Natural killer cell (primary cell): ENCODE measurements at regions of chr1 and their contacts with region 1.

Region 1: GRCh38 chr1:167066333-167067122 is 23.6 kb downstream of the GPA33 start:
- DNase-seq: peak; percentile 81 to 85
- ATAC-seq: peak; percentile 83 to 100 (median 98)
- H3K4me3 ChIP-seq: no peak overlapping the region
- H3K4me3 Mint-ChIP-seq: peak overlapping the region; percentile 38
- H3K27ac ChIP-seq: no peak overlapping the region
- H3K27ac Mint-ChIP-seq: no peak overlapping the region
- H3K4me1 ChIP-seq: peaks cover 8% of the 10 kb centered on the region
- H3K4me1 Mint-ChIP-seq: peaks cover 0 to 16% of the 10 kb centered on the region in 2 donors
- H3K27me3 ChIP-seq: no peaks in the 10 kb centered on the region
- H3K27me3 Mint-ChIP-seq: no peaks in the 10 kb centered on the region
- CTCF ChIP-seq: peak; percentile 99

Region 2: DNA sequence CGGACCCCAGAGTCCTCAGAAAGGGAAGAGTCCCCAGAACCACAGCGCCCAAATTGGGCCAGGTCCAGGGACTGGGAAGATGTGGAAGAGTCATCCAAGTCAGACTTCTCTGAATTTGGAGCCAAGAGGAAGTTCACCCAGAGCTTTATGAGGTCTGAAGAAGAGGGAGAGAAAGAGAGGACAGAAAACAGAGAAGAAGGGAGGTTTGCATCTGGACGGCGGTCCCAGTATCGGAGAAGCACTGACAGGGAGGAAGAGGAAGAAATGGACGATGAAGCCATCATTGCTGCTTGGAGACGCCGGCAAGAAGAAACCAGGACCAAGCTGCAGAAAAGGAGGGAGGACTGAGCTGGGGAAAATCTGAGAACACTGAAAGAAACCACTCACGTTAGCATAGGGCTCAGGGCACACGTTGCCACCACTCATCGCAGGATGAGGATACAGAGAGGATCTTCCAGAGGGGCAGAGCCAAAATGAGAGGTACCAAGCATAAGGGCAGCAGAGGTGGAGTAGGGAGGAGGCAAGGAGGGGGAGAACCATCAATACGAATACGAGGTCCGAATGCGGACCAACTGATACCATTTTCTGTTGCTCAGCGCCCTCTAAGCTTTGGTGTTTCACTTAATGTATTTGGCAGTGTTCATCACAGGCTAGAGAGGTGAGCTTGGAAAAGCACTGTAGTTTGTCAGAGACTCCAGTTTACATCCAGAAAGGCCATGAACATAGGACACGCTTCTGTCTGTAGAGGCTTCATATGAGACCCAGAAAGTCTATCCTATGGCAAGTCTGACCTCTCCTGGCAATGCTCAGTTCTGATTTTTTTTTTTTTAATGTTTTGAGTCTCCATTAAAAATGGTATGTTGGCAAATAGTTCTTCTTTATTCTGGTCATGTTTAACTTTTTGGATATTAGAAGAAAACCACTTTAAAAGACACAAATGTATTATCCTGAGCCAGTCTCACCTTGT is 62.0 kb after region 1 on chr1:
- intact Hi-C with region 1: loop called (anchors 1 kb)
- DNase-seq: peak in 1 of 2 donors; percentile 49
- ATAC-seq: peak in 1 of 3 donors; percentile 41
- H3K4me3 ChIP-seq: no peak overlapping the region
- H3K4me3 Mint-ChIP-seq: no peak overlapping the region
- H3K27ac ChIP-seq: no peak overlapping the region
- H3K27ac Mint-ChIP-seq: no peak overlapping the region
- H3K4me1 ChIP-seq: no peaks in the 10 kb centered on the region
- H3K4me1 Mint-ChIP-seq: peaks cover 0 to 4% of the 10 kb centered on the region in 2 donors
- H3K27me3 ChIP-seq: no peaks in the 10 kb centered on the region
- H3K27me3 Mint-ChIP-seq: peaks cover 35 to 37% of the 10 kb centered on the region in 2 donors
- CTCF ChIP-seq: peak; percentile 17

Region 3: GRCh38 chr1:167220537-167221125 is 154.1 kb after region 1 on chr1 and contains the start of gene POU2F1:
- intact Hi-C with region 1: loop called (anchors 2 kb)
- DNase-seq: peak; percentile 97 to 100
- ATAC-seq: peak; percentile 77 to 95 (median 81)
- H3K4me3 ChIP-seq: peak within 1 kb of the TSS; percentile 98
- H3K4me3 Mint-ChIP-seq: peak within 1 kb of the TSS; percentile 93
- H3K27ac ChIP-seq: peak within 1 kb of the TSS; percentile 95
- H3K27ac Mint-ChIP-seq: peak within 1 kb of the TSS; percentile 97
- H3K4me1 ChIP-seq: peaks cover 11% of the 10 kb centered on the region
- H3K4me1 Mint-ChIP-seq: peaks cover 46 to 48% of the 10 kb centered on the region in 2 donors
- H3K27me3 ChIP-seq: no peaks in the 10 kb centered on the region
- H3K27me3 Mint-ChIP-seq: no peaks in the 10 kb centered on the region
- CTCF ChIP-seq: peak; percentile 63
- total RNA-seq, gene POU2F1: 39.8 to 44.6 (median 40.9) TPM

Region 4: DNA sequence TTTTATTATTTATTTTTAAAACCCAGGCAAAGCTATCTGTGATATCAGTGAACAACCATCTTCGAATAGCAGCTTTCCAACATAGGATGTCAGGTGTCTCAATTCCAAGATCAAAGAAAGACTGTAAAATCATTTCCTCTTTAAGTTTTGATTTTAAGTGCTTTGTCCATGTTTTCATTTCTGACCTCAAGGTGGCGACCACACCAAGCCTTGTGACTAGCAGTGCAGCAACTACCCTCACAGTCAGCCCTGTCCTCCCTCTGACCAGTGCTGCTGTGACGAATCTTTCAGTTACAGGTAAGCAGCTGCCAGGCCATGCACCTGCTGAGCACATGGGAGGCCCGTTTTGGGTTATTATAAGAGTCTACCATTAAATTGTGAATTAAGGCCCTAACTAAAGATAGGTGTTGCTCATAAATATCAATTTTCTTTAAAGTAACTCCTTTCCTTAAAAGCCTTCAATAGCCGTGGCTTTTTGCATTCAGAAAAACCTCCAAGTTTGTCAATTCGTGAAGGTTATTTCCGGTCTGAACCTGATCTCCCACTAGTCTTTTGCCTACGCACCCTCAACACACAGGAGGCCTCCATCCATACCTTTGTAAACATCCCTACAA is 334.8 kb after region 1 on chr1:
- intact Hi-C with region 1: loop called (anchors 10 kb)
- DNase-seq: peak; percentile 55 to 80
- ATAC-seq: peak; percentile 82 to 98 (median 97)
- H3K4me3 ChIP-seq: no peak overlapping the region
- H3K4me3 Mint-ChIP-seq: no peak overlapping the region
- H3K27ac ChIP-seq: no peak overlapping the region
- H3K27ac Mint-ChIP-seq: peak overlapping the region; percentile 58 to 62
- H3K4me1 ChIP-seq: peaks cover 4% of the 10 kb centered on the region
- H3K4me1 Mint-ChIP-seq: peaks cover 9 to 10% of the 10 kb centered on the region in 2 donors
- H3K27me3 ChIP-seq: no peaks in the 10 kb centered on the region
- H3K27me3 Mint-ChIP-seq: no peaks in the 10 kb centered on the region
- CTCF ChIP-seq: peak; percentile 70

Region 5: GRCh38 chr1:167442124-167442848 is 375.8 kb after region 1 on chr1:
- intact Hi-C with region 1: loop called (anchors 10 kb)
- DNase-seq: peak; percentile 83 to 92
- ATAC-seq: peak; percentile 47 to 76 (median 63)
- H3K4me3 ChIP-seq: no peak overlapping the region
- H3K4me3 Mint-ChIP-seq: peak overlapping the region; percentile 78
- H3K27ac ChIP-seq: peak overlapping the region; percentile 86
- H3K27ac Mint-ChIP-seq: peak overlapping the region; percentile 91 to 100
- H3K4me1 ChIP-seq: peaks cover 94% of the 10 kb centered on the region
- H3K4me1 Mint-ChIP-seq: peaks cover 87 to 94% of the 10 kb centered on the region in 2 donors
- H3K27me3 ChIP-seq: no peaks in the 10 kb centered on the region
- H3K27me3 Mint-ChIP-seq: no peaks in the 10 kb centered on the region
- CTCF ChIP-seq: peak; percentile 79

Region 6: GRCh38 chr1:167533851-167534300 is 467.3 kb after region 1 on chr1:
- intact Hi-C with region 1: loop called (anchors 2 kb)
- DNase-seq: peak; percentile 65 to 84
- ATAC-seq: peak; percentile 87 to 99 (median 96)
- H3K4me3 ChIP-seq: no peak overlapping the region
- H3K4me3 Mint-ChIP-seq: no peak overlapping the region
- H3K27ac ChIP-seq: no peak overlapping the region
- H3K27ac Mint-ChIP-seq: peak overlapping the region in 1 of 2 donors; percentile 22
- H3K4me1 ChIP-seq: peaks cover 6% of the 10 kb centered on the region
- H3K4me1 Mint-ChIP-seq: no peaks in the 10 kb centered on the region
- H3K27me3 ChIP-seq: no peaks in the 10 kb centered on the region
- H3K27me3 Mint-ChIP-seq: no peaks in the 10 kb centered on the region
- CTCF ChIP-seq: peak; percentile 91

Region 7: GRCh38 chr1:167553136-167554027 is 486.9 kb after region 1 on chr1 and contains the start of gene CREG1:
- intact Hi-C with region 1: loop called (anchors 5 kb)
- DNase-seq: peak; percentile 87 to 94
- ATAC-seq: peak; percentile 97 to 99 (median 97)
- H3K4me3 ChIP-seq: peak within 1 kb of the TSS; percentile 58
- H3K4me3 Mint-ChIP-seq: peak within 1 kb of the TSS; percentile 92
- H3K27ac ChIP-seq: no peak within 1 kb of the TSS
- H3K27ac Mint-ChIP-seq: peak within 1 kb of the TSS; percentile 43 to 70
- H3K4me1 ChIP-seq: peaks cover 20% of the 10 kb centered on the region
- H3K4me1 Mint-ChIP-seq: peaks cover 12 to 20% of the 10 kb centered on the region in 2 donors
- H3K27me3 ChIP-seq: no peaks in the 10 kb centered on the region
- H3K27me3 Mint-ChIP-seq: peaks cover 0 to 9% of the 10 kb centered on the region in 2 donors
- CTCF ChIP-seq: no peak
- total RNA-seq, gene CREG1: 6.7 to 15.8 (median 8.9) TPM